ENCODE measurements at regions of chr3 and their contacts with region 1.

Region 1: DNA sequence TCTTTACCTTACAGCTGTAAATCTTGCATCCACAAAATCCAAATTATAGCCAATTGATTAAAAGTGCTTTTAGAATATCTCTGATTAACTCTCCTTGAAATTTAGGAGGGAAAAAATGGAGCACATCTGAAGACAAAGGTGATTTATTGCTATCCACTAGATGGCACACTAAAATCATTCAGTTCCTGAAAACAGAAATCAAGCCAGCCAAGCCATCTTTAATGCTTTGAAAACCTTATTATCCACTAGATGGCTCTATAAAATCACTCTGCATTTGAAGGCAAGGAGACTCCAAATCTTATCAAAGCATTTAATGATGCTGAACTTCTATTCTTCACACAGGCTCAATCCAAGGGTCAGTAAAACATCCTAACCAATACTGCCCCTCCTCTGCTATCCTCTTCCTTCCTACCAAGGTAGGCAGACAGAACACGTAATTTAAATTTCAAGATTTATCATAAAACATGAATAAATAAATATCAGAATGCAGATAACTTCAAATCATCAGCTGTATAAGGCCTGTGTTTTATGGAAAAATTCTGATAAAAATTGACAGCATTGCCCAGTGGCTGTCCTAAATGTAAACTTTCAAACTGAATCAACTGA is 48.4 kb downstream of the GOLIM4 start:
- H3K4me3 Mint-ChIP-seq: no peak overlapping the region
- H3K27ac Mint-ChIP-seq: no peak overlapping the region
- H3K4me1 Mint-ChIP-seq: peaks cover 23% of the 10 kb centered on the region
- H3K27me3 Mint-ChIP-seq: no peaks in the 10 kb centered on the region

Region 2: DNA sequence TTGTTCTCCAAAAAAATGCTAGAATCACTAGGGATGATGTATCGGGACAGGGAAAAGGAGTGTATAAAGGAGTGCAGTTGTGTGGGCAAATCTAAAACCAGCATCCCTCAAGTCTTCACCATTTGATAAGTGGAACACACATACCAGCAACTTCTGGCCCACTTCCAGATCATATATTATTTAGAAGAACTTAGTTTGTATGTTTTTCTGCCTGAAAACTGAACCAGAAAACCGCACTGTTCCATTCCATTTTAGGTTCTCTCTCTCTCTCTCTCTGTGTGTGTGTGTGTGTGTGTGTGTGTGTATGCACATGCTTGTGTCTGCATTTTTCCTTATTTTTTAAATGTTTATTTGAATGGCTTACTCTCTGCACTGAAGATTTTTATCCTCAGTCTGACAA is 218.2 kb before region 1 on chr3:
- intact Hi-C with region 1: no loop called
- H3K4me3 Mint-ChIP-seq: no peak overlapping the region
- H3K27ac Mint-ChIP-seq: no peak overlapping the region
- H3K4me1 Mint-ChIP-seq: peaks cover 7% of the 10 kb centered on the region
- H3K27me3 Mint-ChIP-seq: no peaks in the 10 kb centered on the region

Region 3: GRCh38 chr3:168095611-168096209 is 48.4 kb after region 1 on chr3 and contains the start of gene GOLIM4:
- intact Hi-C with region 1: loop called (anchors 1 kb)
- H3K4me3 Mint-ChIP-seq: peak within 1 kb of the TSS; percentile 92
- H3K27ac Mint-ChIP-seq: peak within 1 kb of the TSS; percentile 98
- H3K4me1 Mint-ChIP-seq: peaks cover 21% of the 10 kb centered on the region
- H3K27me3 Mint-ChIP-seq: no peaks in the 10 kb centered on the region

Measured in dendritic cell treated with granulocyte-macrophage colony-stimulating factor and Interleukin-4, amounts not matched to agents 40 ng/mL and 50 ng/mL, for 4 days (primary cell).